CD14-positive monocyte (primary cell): ENCODE measurements at regions of chr13 and their contacts with region 1.

Region 1: DNA sequence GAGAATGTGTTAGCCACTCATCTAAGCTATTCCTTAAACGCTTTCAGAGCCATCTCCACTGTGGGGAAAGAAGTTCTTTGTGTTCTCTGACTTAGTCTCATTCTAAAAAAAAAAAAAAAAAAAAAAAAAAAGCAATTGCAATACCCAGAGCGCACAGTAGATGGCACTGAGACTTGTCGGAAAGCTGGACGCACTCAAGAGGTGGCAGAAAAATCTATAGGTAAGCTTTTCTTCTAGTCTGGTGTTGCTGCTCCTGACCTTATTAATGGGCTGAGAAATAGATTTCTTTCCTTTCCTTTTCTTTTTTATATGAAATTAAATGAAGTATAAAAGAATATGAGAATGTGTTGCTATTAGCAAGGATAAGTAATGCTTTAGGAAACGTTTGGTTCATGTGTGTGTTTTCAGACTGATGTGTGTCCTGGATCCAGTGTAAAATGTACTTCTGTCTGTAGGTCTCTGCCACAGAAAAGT is 4.7 kb upstream of the GJB2 start:
- DNase-seq: peak; percentile 19 to 53 (median 47)
- H3K4me3 ChIP-seq: no peak overlapping the region
- H3K4me3 Mint-ChIP-seq: no peak overlapping the region
- H3K27ac ChIP-seq: no peak overlapping the region
- H3K27ac Mint-ChIP-seq: peak overlapping the region in 1 of 7 donors; percentile 49
- H3K4me1 ChIP-seq: peaks cover 31 to 32% of the 10 kb centered on the region in 2 donors
- H3K4me1 Mint-ChIP-seq: peaks cover 33% of the 10 kb centered on the region
- H3K27me3 ChIP-seq: peaks cover 35% of the 10 kb centered on the region in 2 donors
- H3K27me3 Mint-ChIP-seq: peaks cover 26 to 41% (median 39%) of the 10 kb centered on the region in 3 donors
- CTCF ChIP-seq: peak; percentile 89

Region 2: GRCh38 chr13:19863323-19864023 is 333.9 kb before region 1 on chr13 and contains the start of gene ZMYM5:
- intact Hi-C with region 1: no loop called
- DNase-seq: peak; percentile 96 to 98 (median 97)
- H3K4me3 ChIP-seq: peak within 1 kb of the TSS; percentile 84 to 95 (median 90)
- H3K4me3 Mint-ChIP-seq: peak within 1 kb of the TSS; percentile 96
- H3K27ac ChIP-seq: peak within 1 kb of the TSS; percentile 92 to 96
- H3K27ac Mint-ChIP-seq: peak within 1 kb of the TSS; percentile 89 to 99 (median 95)
- H3K4me1 ChIP-seq: peaks cover 20 to 27% of the 10 kb centered on the region in 2 donors
- H3K4me1 Mint-ChIP-seq: peaks cover 24% of the 10 kb centered on the region
- H3K27me3 ChIP-seq: no peaks in the 10 kb centered on the region
- H3K27me3 Mint-ChIP-seq: peaks cover 0 to 1% (median 0%) of the 10 kb centered on the region in 3 donors
- CTCF ChIP-seq: no peak
- polyA plus RNA-seq, gene ZMYM5: 11.1 to 13.2 (median 11.1) TPM

Region 3: GRCh38 chr13:20359335-20359734 is 161.9 kb after region 1 on chr13:
- intact Hi-C with region 1: loop called (anchors 10 kb)
- DNase-seq: peak in 1 of 3 donors; percentile 55
- H3K4me3 ChIP-seq: no peak overlapping the region
- H3K4me3 Mint-ChIP-seq: no peak overlapping the region
- H3K27ac ChIP-seq: no peak overlapping the region
- H3K27ac Mint-ChIP-seq: peak overlapping the region in 1 of 7 donors; percentile 48
- H3K4me1 ChIP-seq: peaks cover 6 to 9% of the 10 kb centered on the region in 2 donors
- H3K4me1 Mint-ChIP-seq: peaks cover 27% of the 10 kb centered on the region
- H3K27me3 ChIP-seq: no peaks in the 10 kb centered on the region
- H3K27me3 Mint-ChIP-seq: peaks cover 0 to 5% (median 4%) of the 10 kb centered on the region in 3 donors
- CTCF ChIP-seq: no peak